Natural killer cell (primary cell): ENCODE measurements at regions of chr17 and their contacts with region 1.

Region 1: DNA sequence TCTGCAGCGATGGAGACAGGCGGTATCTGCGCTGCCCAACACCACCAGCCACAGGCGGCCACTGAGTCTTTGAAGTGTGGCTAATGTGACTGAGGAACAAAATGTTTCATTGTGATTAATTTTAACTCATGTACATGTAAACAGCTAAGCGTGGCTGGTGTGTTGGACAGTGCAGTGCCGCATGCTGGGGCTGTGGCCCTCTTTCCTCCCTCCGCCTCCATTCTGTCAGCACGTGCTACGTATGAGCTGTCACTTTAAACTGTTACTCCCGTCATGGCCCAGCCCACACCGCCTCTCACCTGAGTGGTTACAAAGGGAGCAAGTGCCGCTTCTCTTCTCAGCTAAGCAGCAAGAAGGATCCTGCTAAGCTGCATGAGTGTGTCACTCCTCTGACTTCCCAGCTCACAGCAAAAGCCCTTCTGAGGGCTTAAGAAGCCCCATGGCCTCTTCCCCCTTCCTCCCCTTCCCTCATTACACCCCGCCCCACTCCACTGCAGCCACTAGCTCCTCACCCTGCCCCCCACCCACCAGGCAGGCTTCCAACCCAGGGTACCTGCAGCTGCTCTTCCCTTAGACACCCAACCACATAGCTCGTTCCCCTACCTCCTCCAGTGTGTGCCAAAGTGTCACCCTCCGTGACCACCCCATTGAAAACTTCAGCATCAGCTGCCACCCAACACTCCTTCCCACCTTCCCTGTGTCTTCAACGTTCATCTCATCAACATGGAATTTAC is 15.0 kb downstream of the HASPIN start:
- DNase-seq: peak in 1 of 2 donors; percentile 79
- ATAC-seq: peak; percentile 38 to 63 (median 59)
- H3K4me3 ChIP-seq: no peak overlapping the region
- H3K4me3 Mint-ChIP-seq: no peak overlapping the region
- H3K27ac ChIP-seq: no peak overlapping the region
- H3K27ac Mint-ChIP-seq: peak overlapping the region; percentile 34 to 75
- H3K4me1 ChIP-seq: peaks cover 41% of the 10 kb centered on the region
- H3K4me1 Mint-ChIP-seq: peaks cover 26 to 36% of the 10 kb centered on the region in 2 donors
- H3K27me3 ChIP-seq: no peaks in the 10 kb centered on the region
- H3K27me3 Mint-ChIP-seq: no peaks in the 10 kb centered on the region
- CTCF ChIP-seq: no peak

Region 2: GRCh38 chr17:3647769-3648555 is 90.8 kb before region 1 on chr17:
- intact Hi-C with region 1: no loop called
- DNase-seq: peak in 1 of 2 donors; percentile 57
- ATAC-seq: peak in 2 of 3 donors; percentile 44 to 67
- H3K4me3 ChIP-seq: no peak overlapping the region
- H3K4me3 Mint-ChIP-seq: no peak overlapping the region
- H3K27ac ChIP-seq: no peak overlapping the region
- H3K27ac Mint-ChIP-seq: no peak overlapping the region
- H3K4me1 ChIP-seq: no peaks in the 10 kb centered on the region
- H3K4me1 Mint-ChIP-seq: peaks cover 0 to 8% of the 10 kb centered on the region in 2 donors
- H3K27me3 ChIP-seq: no peaks in the 10 kb centered on the region
- H3K27me3 Mint-ChIP-seq: no peaks in the 10 kb centered on the region
- CTCF ChIP-seq: no peak

Region 3: DNA sequence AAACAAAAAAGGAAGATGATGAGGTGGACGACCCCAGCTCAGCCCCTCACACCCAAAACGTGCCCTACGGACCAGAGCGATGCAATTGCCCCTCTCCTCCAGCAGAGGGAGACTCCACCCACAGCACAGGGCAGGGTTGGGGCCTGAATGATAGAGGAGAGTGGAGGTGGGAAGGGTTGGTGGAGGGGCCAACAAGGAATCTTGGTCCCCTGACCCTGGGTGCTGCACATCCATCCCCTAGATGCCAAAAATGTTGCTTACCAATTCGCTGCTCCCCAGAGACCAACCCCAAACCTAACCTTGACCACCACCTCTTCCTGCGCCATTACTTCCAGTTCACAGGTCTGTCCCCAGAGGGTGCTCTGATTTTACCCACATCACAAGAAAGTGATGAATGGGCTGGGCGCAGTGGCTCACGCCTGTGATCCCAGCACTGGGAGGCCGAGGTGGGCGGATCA is 55.6 kb before region 1 on chr17:
- intact Hi-C with region 1: loop called (anchors 2 kb)
- DNase-seq: peak; percentile 46 to 82
- ATAC-seq: peak; percentile 92 to 99 (median 94)
- H3K4me3 ChIP-seq: no peak overlapping the region
- H3K4me3 Mint-ChIP-seq: no peak overlapping the region
- H3K27ac ChIP-seq: no peak overlapping the region
- H3K27ac Mint-ChIP-seq: peak overlapping the region in 1 of 2 donors; percentile 42
- H3K4me1 ChIP-seq: peaks cover 20% of the 10 kb centered on the region
- H3K4me1 Mint-ChIP-seq: peaks cover 0 to 6% of the 10 kb centered on the region in 2 donors
- H3K27me3 ChIP-seq: no peaks in the 10 kb centered on the region
- H3K27me3 Mint-ChIP-seq: no peaks in the 10 kb centered on the region
- CTCF ChIP-seq: peak; percentile 96

Region 4: DNA sequence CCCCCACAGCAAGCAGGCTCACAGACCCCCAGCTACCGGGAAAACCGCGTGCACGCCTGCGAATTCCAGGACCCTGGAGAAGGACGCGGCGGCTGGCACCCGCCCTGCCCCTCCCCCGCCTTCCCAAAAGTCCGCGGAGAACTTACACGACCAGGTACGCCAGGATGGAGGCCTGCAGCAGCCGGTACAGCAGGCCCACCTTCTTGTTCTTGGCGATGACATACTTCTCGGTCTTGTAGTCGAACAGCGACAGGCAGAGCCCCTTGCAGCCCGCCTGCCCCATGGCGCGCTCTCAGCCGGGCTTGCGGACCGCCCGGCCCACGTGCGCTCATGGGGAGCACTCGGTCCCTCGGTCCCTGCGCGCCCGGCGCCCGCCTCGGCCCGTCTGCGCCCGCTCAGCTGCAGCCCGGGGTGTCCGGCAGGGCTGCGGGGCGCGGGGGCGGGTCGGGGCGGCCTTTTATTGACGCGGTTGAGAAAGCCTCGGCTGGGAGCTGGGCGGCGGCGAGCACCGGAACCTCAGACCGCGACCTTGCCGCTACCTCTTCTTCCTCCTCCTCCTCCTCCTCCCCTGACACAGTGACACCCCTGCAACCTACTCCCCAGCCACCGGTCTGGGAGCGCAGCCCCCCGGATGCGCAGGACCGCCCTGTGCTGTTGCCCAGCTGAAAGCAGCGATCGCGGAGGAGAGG is 42.9 kb before region 1 on chr17 and contains the start of gene P2RX5:
- intact Hi-C with region 1: no loop called
- DNase-seq: peak; percentile 29 to 63
- ATAC-seq: peak; percentile 46 to 61 (median 52)
- H3K4me3 ChIP-seq: peak within 1 kb of the TSS; percentile 60
- H3K4me3 Mint-ChIP-seq: peak within 1 kb of the TSS; percentile 80
- H3K27ac ChIP-seq: peak within 1 kb of the TSS; percentile 52
- H3K27ac Mint-ChIP-seq: peak within 1 kb of the TSS in 1 of 2 donors; percentile 79
- H3K4me1 ChIP-seq: peaks cover 52% of the 10 kb centered on the region
- H3K4me1 Mint-ChIP-seq: peaks cover 12 to 36% of the 10 kb centered on the region in 2 donors
- H3K27me3 ChIP-seq: peaks cover 3% of the 10 kb centered on the region
- H3K27me3 Mint-ChIP-seq: peaks cover 0 to 5% of the 10 kb centered on the region in 2 donors
- CTCF ChIP-seq: no peak
- total RNA-seq, gene P2RX5: 7.8 to 15.4 (median 9.2) TPM

Region 5: GRCh38 chr17:3754458-3755334 is 16.0 kb after region 1 on chr17:
- intact Hi-C with region 1: no loop called
- DNase-seq: peak; percentile 72 to 88
- ATAC-seq: peak; percentile 96 to 98 (median 96)
- H3K4me3 ChIP-seq: no peak overlapping the region
- H3K4me3 Mint-ChIP-seq: peak overlapping the region; percentile 68
- H3K27ac ChIP-seq: peak overlapping the region; percentile 64
- H3K27ac Mint-ChIP-seq: peak overlapping the region; percentile 50 to 83
- H3K4me1 ChIP-seq: peaks cover 43% of the 10 kb centered on the region
- H3K4me1 Mint-ChIP-seq: peaks cover 2 to 29% of the 10 kb centered on the region in 2 donors
- H3K27me3 ChIP-seq: no peaks in the 10 kb centered on the region
- H3K27me3 Mint-ChIP-seq: no peaks in the 10 kb centered on the region
- CTCF ChIP-seq: no peak

Region 6: DNA sequence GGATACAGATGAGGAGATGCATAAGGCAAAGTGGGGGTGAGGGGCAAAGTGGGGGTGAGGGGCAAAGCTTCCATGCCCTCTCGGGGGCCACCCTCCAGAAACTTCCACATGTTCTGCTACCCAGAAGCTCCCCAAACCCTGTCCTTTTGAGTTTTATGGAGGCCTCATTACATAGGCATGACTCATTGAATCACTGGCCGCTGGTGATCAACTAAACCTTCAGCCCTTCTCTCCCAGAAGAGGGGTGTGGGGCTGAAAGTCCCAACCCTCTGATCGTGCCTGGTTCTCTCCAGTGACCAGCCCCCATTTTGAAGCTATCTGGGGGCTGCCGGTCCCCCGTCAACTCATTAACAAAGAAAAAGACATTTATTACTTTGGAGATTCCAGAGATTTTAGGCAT is 34.8 kb after region 1 on chr17:
- intact Hi-C with region 1: no loop called
- DNase-seq: no peak
- ATAC-seq: no peak
- H3K4me3 ChIP-seq: no peak overlapping the region
- H3K4me3 Mint-ChIP-seq: no peak overlapping the region
- H3K27ac ChIP-seq: no peak overlapping the region
- H3K27ac Mint-ChIP-seq: no peak overlapping the region
- H3K4me1 ChIP-seq: peaks cover 39% of the 10 kb centered on the region
- H3K4me1 Mint-ChIP-seq: peaks cover 33 to 41% of the 10 kb centered on the region in 2 donors
- H3K27me3 ChIP-seq: no peaks in the 10 kb centered on the region
- H3K27me3 Mint-ChIP-seq: peaks cover 0 to 4% of the 10 kb centered on the region in 2 donors
- CTCF ChIP-seq: no peak

Region 7: GRCh38 chr17:3827124-3827773 is 88.5 kb after region 1 on chr17:
- intact Hi-C with region 1: loop called (anchors 1 kb)
- DNase-seq: peak; percentile 54 to 87
- ATAC-seq: peak; percentile 73 to 79 (median 74)
- H3K4me3 ChIP-seq: no peak overlapping the region
- H3K4me3 Mint-ChIP-seq: no peak overlapping the region
- H3K27ac ChIP-seq: no peak overlapping the region
- H3K27ac Mint-ChIP-seq: peak overlapping the region in 1 of 2 donors; percentile 11
- H3K4me1 ChIP-seq: no peaks in the 10 kb centered on the region
- H3K4me1 Mint-ChIP-seq: peaks cover 7% of the 10 kb centered on the region in 2 donors
- H3K27me3 ChIP-seq: no peaks in the 10 kb centered on the region
- H3K27me3 Mint-ChIP-seq: no peaks in the 10 kb centered on the region
- CTCF ChIP-seq: peak; percentile 92

Region 8: GRCh38 chr17:4004517-4005295 is 266.0 kb after region 1 on chr17:
- intact Hi-C with region 1: loop called (anchors 10 kb)
- DNase-seq: peak; percentile 63 to 77
- ATAC-seq: peak; percentile 70 to 84 (median 81)
- H3K4me3 ChIP-seq: no peak overlapping the region
- H3K4me3 Mint-ChIP-seq: no peak overlapping the region
- H3K27ac ChIP-seq: no peak overlapping the region
- H3K27ac Mint-ChIP-seq: no peak overlapping the region
- H3K4me1 ChIP-seq: peaks cover 10% of the 10 kb centered on the region
- H3K4me1 Mint-ChIP-seq: peaks cover 0 to 12% of the 10 kb centered on the region in 2 donors
- H3K27me3 ChIP-seq: no peaks in the 10 kb centered on the region
- H3K27me3 Mint-ChIP-seq: peaks cover 0 to 3% of the 10 kb centered on the region in 2 donors
- CTCF ChIP-seq: peak; percentile 97